ENCODE measurements at regions of chr15 and their contacts with region 1.

Region 1: DNA sequence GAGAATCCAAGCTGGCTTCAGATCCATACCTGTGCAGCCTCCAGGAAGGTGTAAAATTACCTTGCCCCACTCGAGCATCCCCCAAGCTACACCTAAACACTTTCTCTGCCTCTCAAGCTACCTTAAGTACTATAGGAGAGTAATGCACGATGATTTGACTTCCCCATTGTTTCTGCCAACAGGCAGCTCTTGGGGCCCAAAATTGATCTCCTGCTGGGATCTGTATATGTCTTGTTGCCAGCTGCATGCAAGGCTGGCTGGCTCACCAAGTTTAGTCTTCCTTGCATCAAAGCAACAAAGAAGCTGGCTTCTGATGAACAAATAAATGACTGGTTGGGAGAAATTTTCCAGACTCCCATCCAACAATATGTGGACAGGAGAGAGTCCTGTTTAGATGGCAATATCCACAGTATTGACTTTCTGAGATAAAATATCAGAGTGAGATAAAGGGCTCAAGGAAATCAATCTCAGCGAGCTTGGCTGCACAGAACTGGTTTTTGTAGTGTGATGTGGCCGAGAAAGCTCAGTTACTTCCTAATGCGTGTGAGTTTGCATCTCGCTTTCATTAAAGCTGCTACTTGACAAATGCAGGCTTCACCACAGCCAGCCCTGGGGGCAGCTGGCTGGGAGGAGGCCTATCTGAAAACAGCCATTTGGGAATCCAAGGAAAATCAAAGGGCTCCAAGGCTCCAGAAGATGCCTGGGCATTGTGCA is 140.7 kb downstream of the MINAR1 start:
- DNase-seq: no peak
- ATAC-seq: no peak
- H3K4me3 ChIP-seq: no peak overlapping the region
- H3K27ac ChIP-seq: no peak overlapping the region
- H3K4me1 ChIP-seq: no peaks in the 10 kb centered on the region
- H3K27me3 ChIP-seq: peaks cover 30% of the 10 kb centered on the region
- CTCF ChIP-seq: no peak
- POLR2A ChIP-seq: no peak
- RAD21 ChIP-seq: no peak

Region 2: DNA sequence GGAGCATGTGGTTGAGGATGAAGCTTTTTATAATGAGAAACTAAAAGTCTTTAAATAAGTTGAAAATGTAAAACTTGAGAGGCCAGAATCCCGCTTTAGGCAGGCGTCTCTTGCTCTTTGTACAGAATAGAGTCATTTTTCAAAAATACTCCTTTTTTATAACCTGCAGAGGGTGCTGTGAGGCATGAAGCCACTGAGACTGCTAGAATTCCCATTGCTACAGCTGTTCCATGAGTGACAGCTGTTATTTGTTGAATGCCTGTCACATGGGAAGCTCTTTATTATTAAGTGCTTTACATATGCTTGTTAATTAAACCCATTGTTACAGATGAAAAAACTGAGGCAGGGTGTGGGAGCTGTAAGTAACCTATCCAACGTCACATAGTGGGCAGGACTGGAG is 122.2 kb before region 1 on chr15:
- CTCF ChIA-PET with region 1: no interaction called
- POLR2A ChIA-PET with region 1: no interaction called
- RAD21 ChIA-PET with region 1: no interaction called
- intact Hi-C with region 1: loop called (anchors 5 kb)
- DNase-seq: no peak
- ATAC-seq: peak; percentile 54; the same call in 1 of the 2 replicates
- H3K4me3 ChIP-seq: no peak overlapping the region
- H3K27ac ChIP-seq: no peak overlapping the region
- H3K4me1 ChIP-seq: no peaks in the 10 kb centered on the region
- H3K27me3 ChIP-seq: no peaks in the 10 kb centered on the region
- CTCF ChIP-seq: peak; percentile 28 to 43 (median 38); a peak in 4 of 6 replicates
- POLR2A ChIP-seq: no peak
- RAD21 ChIP-seq: peak; percentile 33; the same call in 1 of the 2 replicates

Measured in HCT116 (cell line).